GM23248 (cell line): ENCODE measurements at regions of chr7 and their contacts with region 1.

Region 1: GRCh38 chr7:66013916-66014315 is 31.9 kb upstream of the GUSB start:
- DNase-seq: peak; percentile 67
- H3K4me3 ChIP-seq: no peak overlapping the region
- H3K27ac ChIP-seq: no peak overlapping the region
- H3K4me1 ChIP-seq: peaks cover 6% of the 10 kb centered on the region; the same call in 1 of the 2 replicates
- H3K27me3 ChIP-seq: no peaks in the 10 kb centered on the region

Region 2: GRCh38 chr7:65609131-65609530 is 404.8 kb before region 1 on chr7:
- in situ Hi-C with region 1: loop called (anchors 25 kb)
- DNase-seq: no peak
- H3K4me3 ChIP-seq: no peak overlapping the region
- H3K27ac ChIP-seq: no peak overlapping the region
- H3K4me1 ChIP-seq: no peaks in the 10 kb centered on the region
- H3K27me3 ChIP-seq: no peaks in the 10 kb centered on the region; the same call in 1 of the 2 replicates

Region 3: GRCh38 chr7:65731562-65732035 is 282.3 kb before region 1 on chr7:
- in situ Hi-C with region 1: loop called (anchors 25 kb)
- DNase-seq: peak; percentile 8
- H3K4me3 ChIP-seq: no peak overlapping the region
- H3K27ac ChIP-seq: no peak overlapping the region
- H3K4me1 ChIP-seq: no peaks in the 10 kb centered on the region
- H3K27me3 ChIP-seq: no peaks in the 10 kb centered on the region